ENCODE measurements at regions of chr19 and their contacts with region 1.

Region 1: DNA sequence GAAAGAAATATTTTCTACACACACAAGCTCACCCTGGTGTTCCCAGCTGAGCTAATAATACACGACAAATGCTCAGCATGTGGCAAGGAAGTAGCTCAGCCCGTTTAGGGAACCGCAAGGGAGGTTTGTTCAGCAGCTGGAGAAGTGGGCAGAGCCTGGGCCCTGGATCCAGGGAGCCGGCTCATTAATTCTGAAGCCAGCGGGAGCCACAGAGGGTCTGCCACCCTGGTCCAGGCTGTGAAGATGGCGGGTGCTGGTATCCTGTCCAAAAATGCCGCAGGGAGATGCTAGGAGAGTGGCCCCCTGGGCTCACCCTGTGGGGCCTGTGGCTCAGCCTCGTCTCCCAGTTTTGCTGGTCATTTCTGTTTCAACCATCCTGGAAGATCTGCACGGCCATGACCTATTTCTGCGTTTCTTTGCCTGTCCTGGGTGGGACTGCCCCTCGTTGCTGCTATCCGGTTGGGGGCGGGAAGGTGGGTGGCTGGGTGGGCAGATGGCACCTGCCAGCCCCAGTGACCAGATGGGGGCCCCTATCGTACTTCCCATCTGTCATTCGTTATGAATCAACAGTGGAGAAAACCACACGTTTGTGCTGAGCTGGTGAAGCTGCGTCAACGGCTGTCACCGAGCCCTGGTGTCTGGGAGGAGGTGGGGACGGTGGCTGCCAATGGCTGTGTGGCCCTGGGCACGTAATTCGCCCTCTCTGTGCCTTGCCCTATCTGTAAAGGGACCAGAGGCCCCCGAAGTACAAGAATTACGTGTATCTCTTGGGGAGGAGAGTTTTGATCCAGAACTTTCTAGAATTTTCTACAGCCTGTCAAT is 2.7 kb upstream of the GNA15 start:
- DNase-seq: peak; percentile 79
- H3K4me3 Mint-ChIP-seq: peak overlapping the region; percentile 53
- H3K27ac Mint-ChIP-seq: peak overlapping the region; percentile 87
- H3K4me1 Mint-ChIP-seq: peaks cover 29% of the 10 kb centered on the region
- H3K27me3 Mint-ChIP-seq: no peaks in the 10 kb centered on the region

Region 2: GRCh38 chr19:1789261-1790041 is 1343.7 kb before region 1 on chr19:
- intact Hi-C with region 1: no loop called
- DNase-seq: no peak
- H3K4me3 Mint-ChIP-seq: no peak overlapping the region
- H3K27ac Mint-ChIP-seq: no peak overlapping the region
- H3K4me1 Mint-ChIP-seq: no peaks in the 10 kb centered on the region
- H3K27me3 Mint-ChIP-seq: peaks cover 4% of the 10 kb centered on the region

Region 3: DNA sequence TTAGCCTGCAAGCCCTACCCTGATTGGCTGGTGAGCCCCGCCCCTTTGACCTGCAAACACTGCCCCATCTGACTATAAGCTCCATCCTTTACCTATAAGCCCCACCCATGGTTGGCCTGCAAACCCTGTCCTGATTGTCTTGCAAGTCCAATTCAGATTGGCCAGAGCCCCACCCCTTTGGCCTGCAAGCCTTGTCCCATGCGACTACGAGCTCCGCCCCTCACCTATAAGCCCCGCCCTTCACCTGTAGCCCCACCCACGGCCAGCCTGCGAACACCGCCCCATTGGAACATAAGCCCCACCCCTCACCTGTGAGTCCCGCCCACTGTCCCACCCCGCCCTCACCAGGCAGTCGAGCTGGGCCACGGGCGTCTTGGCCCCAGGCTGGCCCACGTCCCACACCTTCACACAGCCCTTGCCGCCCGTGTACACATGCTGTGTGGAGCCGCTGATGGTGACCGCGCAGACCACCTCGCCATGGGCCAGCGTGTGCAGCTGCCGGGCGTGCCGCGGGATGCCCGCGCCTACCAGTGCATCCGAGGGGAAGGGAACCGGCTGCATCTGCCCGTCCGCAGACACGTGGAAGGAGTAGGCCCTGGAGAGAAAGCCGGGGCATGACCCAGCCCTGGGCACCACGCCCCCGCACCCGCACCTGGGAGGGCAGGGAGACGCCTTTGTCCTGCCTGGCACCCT is 127.0 kb before region 1 on chr19:
- intact Hi-C with region 1: no loop called
- DNase-seq: no peak
- H3K4me3 Mint-ChIP-seq: no peak overlapping the region
- H3K27ac Mint-ChIP-seq: no peak overlapping the region
- H3K4me1 Mint-ChIP-seq: no peaks in the 10 kb centered on the region
- H3K27me3 Mint-ChIP-seq: no peaks in the 10 kb centered on the region

Region 4: GRCh38 chr19:3146677-3147100 is 13.5 kb after region 1 on chr19:
- intact Hi-C with region 1: loop called (anchors 1 kb)
- DNase-seq: peak; percentile 45
- H3K4me3 Mint-ChIP-seq: no peak overlapping the region
- H3K27ac Mint-ChIP-seq: peak overlapping the region; percentile 3
- H3K4me1 Mint-ChIP-seq: peaks cover 32% of the 10 kb centered on the region
- H3K27me3 Mint-ChIP-seq: no peaks in the 10 kb centered on the region

Region 5: GRCh38 chr19:3154957-3155736 is 22.0 kb after region 1 on chr19:
- intact Hi-C with region 1: loop called (anchors 1 kb)
- DNase-seq: peak; percentile 79
- H3K4me3 Mint-ChIP-seq: no peak overlapping the region
- H3K27ac Mint-ChIP-seq: no peak overlapping the region
- H3K4me1 Mint-ChIP-seq: peaks cover 9% of the 10 kb centered on the region
- H3K27me3 Mint-ChIP-seq: no peaks in the 10 kb centered on the region

Region 6: GRCh38 chr19:3163230-3163886 is 30.2 kb after region 1 on chr19:
- intact Hi-C with region 1: loop called (anchors 2 kb)
- DNase-seq: peak; percentile 56
- H3K4me3 Mint-ChIP-seq: no peak overlapping the region
- H3K27ac Mint-ChIP-seq: no peak overlapping the region
- H3K4me1 Mint-ChIP-seq: peaks cover 30% of the 10 kb centered on the region
- H3K27me3 Mint-ChIP-seq: no peaks in the 10 kb centered on the region

Region 7: DNA sequence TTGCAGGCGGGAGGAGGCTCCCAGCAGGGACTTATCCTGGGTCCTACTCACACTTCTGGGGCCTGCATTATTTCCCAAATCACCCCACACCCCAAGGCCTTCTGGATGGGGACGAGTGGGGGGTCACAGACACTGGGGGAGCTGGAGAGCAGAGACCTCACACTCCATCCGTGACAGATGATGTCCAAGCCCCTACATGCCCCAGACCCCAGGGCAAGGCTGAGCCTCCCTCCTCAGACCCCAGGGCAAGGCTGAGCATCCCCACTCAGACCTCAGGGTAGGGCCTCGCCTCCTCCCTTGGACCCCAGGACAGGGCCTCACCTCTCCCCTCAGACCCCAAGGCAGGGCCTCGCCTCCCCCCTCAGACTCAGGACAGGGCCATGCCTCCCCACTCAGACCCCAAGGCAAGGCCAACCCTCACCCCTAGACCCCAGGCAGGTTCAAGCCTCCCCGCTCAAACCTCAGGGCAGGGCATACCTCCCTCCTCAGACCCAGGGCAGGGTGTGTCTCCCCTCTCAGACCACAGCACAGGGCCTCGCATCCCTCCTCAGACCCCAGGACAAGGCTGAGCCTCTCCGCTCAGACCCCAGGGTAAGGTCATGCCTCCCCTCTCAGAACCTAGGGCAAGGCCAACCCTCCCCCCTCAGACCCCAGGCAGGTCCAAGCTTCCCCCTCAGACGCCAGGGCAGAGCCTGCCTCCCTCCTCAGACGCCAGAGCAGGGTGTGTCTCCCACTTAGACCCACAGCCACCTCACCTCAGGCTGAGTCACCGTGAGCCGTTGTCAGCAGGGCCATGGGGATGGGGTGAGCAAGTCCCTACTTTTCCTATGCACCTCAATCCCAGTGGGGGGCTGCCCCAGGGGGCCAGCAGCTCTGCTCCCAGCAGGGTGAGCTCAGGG is 43.7 kb after region 1 on chr19:
- intact Hi-C with region 1: loop called (anchors 1 kb)
- DNase-seq: peak; percentile 68
- H3K4me3 Mint-ChIP-seq: peak overlapping the region; percentile 83
- H3K27ac Mint-ChIP-seq: peak overlapping the region; percentile 91
- H3K4me1 Mint-ChIP-seq: peaks cover 15% of the 10 kb centered on the region
- H3K27me3 Mint-ChIP-seq: no peaks in the 10 kb centered on the region